T-cell (primary cell): ENCODE measurements at regions of chrX and their contacts with region 1.

Region 1: GRCh38 chrX:112874175-112874574 is 33.5 kb upstream of the AMOT start:
- DNase-seq: no peak
- ATAC-seq: no peak
- H3K4me3 ChIP-seq: no peak overlapping the region
- H3K4me3 Mint-ChIP-seq: no peak overlapping the region
- H3K27ac ChIP-seq: no peak overlapping the region
- H3K27ac Mint-ChIP-seq: no peak overlapping the region
- H3K4me1 ChIP-seq: no peaks in the 10 kb centered on the region
- H3K4me1 Mint-ChIP-seq: no peaks in the 10 kb centered on the region
- H3K27me3 ChIP-seq: no peaks in the 10 kb centered on the region
- H3K27me3 Mint-ChIP-seq: peaks cover 0 to 16% of the 10 kb centered on the region in 2 donors

Region 2: DNA sequence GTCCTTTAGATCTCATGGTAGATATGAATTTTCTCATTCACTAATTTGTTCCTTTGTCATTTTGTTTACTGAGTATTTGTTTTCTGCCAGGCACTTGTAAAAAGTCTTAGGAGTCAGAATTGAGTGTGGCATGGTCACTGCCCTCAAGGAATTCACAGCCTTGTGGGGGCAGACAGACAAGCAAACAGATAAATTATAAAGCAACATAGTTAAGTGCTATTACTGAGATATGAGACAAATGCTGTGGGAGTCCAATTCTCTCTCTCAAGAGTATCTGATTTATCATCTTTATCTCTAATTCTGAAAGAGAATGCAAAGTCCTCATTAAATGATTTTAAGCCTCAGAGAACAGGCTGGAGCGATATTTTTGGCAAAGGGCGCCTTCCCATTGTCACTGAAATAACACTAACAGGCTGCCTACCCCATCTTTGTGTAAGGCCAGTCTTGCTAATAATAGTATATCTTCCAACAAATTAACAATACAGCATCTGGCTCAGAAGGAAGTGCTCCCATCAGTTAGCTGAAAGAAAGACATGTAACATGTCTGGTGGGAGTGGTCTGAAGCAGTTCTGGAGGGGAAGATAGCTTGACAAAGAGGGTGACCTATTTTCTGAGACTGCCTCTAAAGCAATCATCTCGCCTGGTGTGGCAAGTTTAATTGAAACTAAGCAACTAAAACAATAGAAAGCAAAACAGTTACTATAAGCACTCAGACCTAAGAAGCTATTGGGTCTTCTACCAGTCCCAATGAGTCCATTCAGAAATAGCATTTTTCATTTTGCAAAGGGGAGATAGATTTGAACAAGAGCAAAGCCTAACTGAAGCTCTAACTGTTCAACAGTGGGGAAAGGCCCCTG is 27.9 kb after region 1 on chrX:
- CTCF ChIA-PET with region 1: interaction called in 1 of 2 experiments, 11 read pairs
- POLR2A ChIA-PET with region 1: no interaction called
- DNase-seq: no peak
- ATAC-seq: no peak
- H3K4me3 ChIP-seq: no peak overlapping the region
- H3K4me3 Mint-ChIP-seq: no peak overlapping the region
- H3K27ac ChIP-seq: no peak overlapping the region
- H3K27ac Mint-ChIP-seq: no peak overlapping the region
- H3K4me1 ChIP-seq: no peaks in the 10 kb centered on the region
- H3K4me1 Mint-ChIP-seq: no peaks in the 10 kb centered on the region
- H3K27me3 ChIP-seq: no peaks in the 10 kb centered on the region
- H3K27me3 Mint-ChIP-seq: peaks cover 0 to 8% of the 10 kb centered on the region in 2 donors